Activated naive CD4-positive, alpha-beta T cell treated with anti-CD3 and anti-CD28 coated beads, Interleukin-2, amount 10 ng/mL, durations not matched to agents 7 days and 5 days (primary cell): ENCODE measurements at regions of chr1 and their contacts with region 1.

Region 1: GRCh38 chr1:26848947-26849774 is 13.8 kb upstream of the SFN start:
- DNase-seq: no peak
- H3K4me3 Mint-ChIP-seq: no peak overlapping the region
- H3K27ac Mint-ChIP-seq: no peak overlapping the region
- H3K4me1 Mint-ChIP-seq: no peaks in the 10 kb centered on the region
- H3K27me3 Mint-ChIP-seq: no peaks in the 10 kb centered on the region

Region 2: GRCh38 chr1:26874896-26875295 is 25.7 kb after region 1 on chr1:
- CTCF ChIA-PET with region 1: interaction called, 11 read pairs
- DNase-seq: no peak
- H3K4me3 Mint-ChIP-seq: no peak overlapping the region
- H3K27ac Mint-ChIP-seq: no peak overlapping the region
- H3K4me1 Mint-ChIP-seq: peaks cover 2% of the 10 kb centered on the region
- H3K27me3 Mint-ChIP-seq: no peaks in the 10 kb centered on the region